CD14-positive monocyte (primary cell): ENCODE measurements at regions of chr11 and their contacts with region 1.

Region 1: GRCh38 chr11:73982969-73983740 is 512 bp upstream of the UCP2 start:
- DNase-seq: peak; percentile 96 to 98 (median 97)
- H3K4me3 ChIP-seq: peak overlapping the region; percentile 71 to 97 (median 96)
- H3K4me3 Mint-ChIP-seq: peak overlapping the region; percentile 99 to 100
- H3K27ac ChIP-seq: peak overlapping the region; percentile 96 to 98
- H3K27ac Mint-ChIP-seq: peak overlapping the region; percentile 99 to 100 (median 100)
- H3K4me1 ChIP-seq: peaks cover 50 to 62% of the 10 kb centered on the region in 2 donors
- H3K4me1 Mint-ChIP-seq: peaks cover 53% of the 10 kb centered on the region
- H3K27me3 ChIP-seq: no peaks in the 10 kb centered on the region
- H3K27me3 Mint-ChIP-seq: no peaks in the 10 kb centered on the region
- CTCF ChIP-seq: no peak

Region 2: GRCh38 chr11:74024261-74025029 is 41.3 kb after region 1 on chr11:
- intact Hi-C with region 1: loop called (anchors 2 to 5 kb)
- DNase-seq: peak; percentile 85 to 86 (median 85)
- H3K4me3 ChIP-seq: peak overlapping the region in 1 of 3 experiments; percentile 62
- H3K4me3 Mint-ChIP-seq: no peak overlapping the region
- H3K27ac ChIP-seq: peak overlapping the region; percentile 62 to 94
- H3K27ac Mint-ChIP-seq: peak overlapping the region in 6 of 7 donors; percentile 84 to 96 (median 90)
- H3K4me1 ChIP-seq: peaks cover 76 to 78% of the 10 kb centered on the region in 2 donors
- H3K4me1 Mint-ChIP-seq: peaks cover 26% of the 10 kb centered on the region
- H3K27me3 ChIP-seq: no peaks in the 10 kb centered on the region
- H3K27me3 Mint-ChIP-seq: peaks cover 0 to 3% (median 0%) of the 10 kb centered on the region in 3 donors
- CTCF ChIP-seq: no peak

Region 3: GRCh38 chr11:74170694-74171629 is 187.8 kb after region 1 on chr11 and contains the starts of genes C2CD3 and PPME1:
- intact Hi-C with region 1: loop called in 1 of 2 experiments (anchors 5 kb)
- DNase-seq: peak; percentile 99
- H3K4me3 ChIP-seq: peak within 1 kb of the TSS; percentile 75 to 96 (median 81)
- H3K4me3 Mint-ChIP-seq: no peak within 1 kb of the TSS
- H3K27ac ChIP-seq: peak within 1 kb of the TSS; percentile 73 to 90
- H3K27ac Mint-ChIP-seq: no peak within 1 kb of the TSS
- H3K4me1 ChIP-seq: peaks cover 20 to 24% of the 10 kb centered on the region in 2 donors
- H3K4me1 Mint-ChIP-seq: peaks cover 5% of the 10 kb centered on the region
- H3K27me3 ChIP-seq: no peaks in the 10 kb centered on the region
- H3K27me3 Mint-ChIP-seq: no peaks in the 10 kb centered on the region
- CTCF ChIP-seq: peak; percentile 31
- polyA plus RNA-seq, gene C2CD3: 0.87 to 12.1 (median 2.9) TPM
- polyA plus RNA-seq, gene PPME1: 5.2 to 12.2 (median 8.9) TPM